ENCODE measurements at regions of chr5 and their contacts with region 1.

Region 1: GRCh38 chr5:137778772-137779564 is 24.8 kb upstream of the HNRNPA0 start:
- DNase-seq: peak in 1 of 2 donors; percentile 60
- ATAC-seq: no peak
- H3K4me3 ChIP-seq: no peak overlapping the region
- H3K4me3 Mint-ChIP-seq: no peak overlapping the region
- H3K27ac ChIP-seq: no peak overlapping the region
- H3K27ac Mint-ChIP-seq: no peak overlapping the region
- H3K4me1 ChIP-seq: no peaks in the 10 kb centered on the region
- H3K4me1 Mint-ChIP-seq: no peaks in the 10 kb centered on the region
- H3K27me3 ChIP-seq: no peaks in the 10 kb centered on the region
- H3K27me3 Mint-ChIP-seq: no peaks in the 10 kb centered on the region
- CTCF ChIP-seq: peak; percentile 76

Region 2: DNA sequence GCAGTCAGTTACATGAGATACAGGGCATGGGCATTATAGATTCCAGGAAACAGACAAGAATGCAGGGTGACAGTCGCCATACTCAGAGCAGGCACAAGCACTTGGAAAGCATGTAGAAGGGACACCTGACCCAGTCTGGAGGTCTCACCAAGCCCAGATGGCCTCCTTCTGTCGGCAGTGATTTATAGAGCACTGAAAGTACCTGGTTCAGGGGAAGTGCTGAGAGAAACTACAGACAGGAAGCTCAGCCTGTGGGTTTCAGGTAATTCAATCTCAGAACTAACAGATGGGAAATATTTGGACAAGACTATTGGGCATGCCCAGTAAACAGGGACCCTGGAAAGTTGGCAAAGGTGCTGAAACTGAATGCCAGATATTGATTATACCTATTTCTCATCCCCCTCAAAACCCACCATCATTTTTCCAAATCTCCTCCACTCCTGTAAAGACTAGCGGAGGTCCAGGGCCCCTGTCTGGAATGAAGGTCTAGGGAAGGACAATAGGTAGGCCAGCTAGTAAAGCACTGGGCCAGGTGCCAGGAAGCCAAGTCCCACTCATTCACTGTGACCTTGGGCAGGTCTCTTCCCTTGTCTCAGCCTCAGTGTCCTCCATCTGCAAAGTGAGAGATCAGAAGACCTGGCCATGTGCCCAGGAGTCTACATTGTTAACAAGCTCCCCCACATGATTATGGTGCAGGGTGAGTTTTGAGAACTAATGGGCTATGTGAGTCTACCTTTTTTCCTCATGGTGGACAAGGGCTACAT is 70.0 kb before region 1 on chr5:
- intact Hi-C with region 1: no loop called
- DNase-seq: no peak
- ATAC-seq: no peak
- H3K4me3 ChIP-seq: no peak overlapping the region
- H3K4me3 Mint-ChIP-seq: no peak overlapping the region
- H3K27ac ChIP-seq: no peak overlapping the region
- H3K27ac Mint-ChIP-seq: no peak overlapping the region
- H3K4me1 ChIP-seq: no peaks in the 10 kb centered on the region
- H3K4me1 Mint-ChIP-seq: no peaks in the 10 kb centered on the region
- H3K27me3 ChIP-seq: no peaks in the 10 kb centered on the region
- H3K27me3 Mint-ChIP-seq: no peaks in the 10 kb centered on the region
- CTCF ChIP-seq: no peak

Region 3: DNA sequence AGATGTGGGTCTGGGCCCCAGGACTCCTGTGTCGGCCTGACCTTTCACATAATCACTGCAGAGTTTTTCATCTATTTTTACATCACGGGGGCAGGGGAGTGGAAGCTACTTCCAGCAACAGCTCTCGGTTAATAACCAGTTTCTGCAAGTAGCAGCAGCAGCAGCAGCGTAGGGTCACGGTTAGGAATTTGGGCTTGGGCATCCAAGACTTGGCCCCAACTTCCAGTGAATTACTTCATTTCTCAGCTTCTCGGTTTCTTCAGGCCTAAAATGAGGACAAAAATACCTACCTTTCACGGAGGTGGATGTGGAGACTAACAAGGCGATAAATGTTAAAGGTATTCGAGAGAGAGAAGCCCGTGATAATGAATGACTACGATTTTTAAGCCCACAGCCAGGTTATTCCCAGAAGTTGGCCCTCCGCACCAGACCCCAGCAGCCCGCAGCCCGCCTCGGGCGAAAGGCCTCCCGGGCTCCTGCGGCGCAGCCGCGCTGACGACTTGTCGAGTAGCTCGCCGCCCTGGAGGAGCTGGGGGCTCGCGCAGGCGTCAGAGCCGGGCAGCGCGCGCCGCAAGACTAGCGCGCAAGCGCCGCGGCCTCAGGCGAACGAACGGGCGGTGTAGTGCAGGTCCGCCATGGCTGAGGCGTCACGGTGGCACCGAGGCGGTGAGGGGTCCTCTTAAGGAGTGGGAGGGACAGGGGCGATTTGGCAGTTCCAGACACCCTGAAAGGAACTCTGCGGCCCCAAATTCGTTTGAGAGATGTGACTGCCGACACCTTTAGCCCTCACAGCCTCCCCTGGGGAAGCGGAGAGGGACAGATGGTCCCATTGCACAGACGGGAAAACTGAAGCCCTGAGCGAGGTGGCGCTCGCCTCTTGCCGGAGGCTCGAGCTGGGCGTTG is 110.1 kb after region 1 on chr5 and contains the start of gene PKD2L2:
- intact Hi-C with region 1: loop called (anchors 10 kb)
- DNase-seq: peak; percentile 79 to 91
- ATAC-seq: peak; percentile 95 to 99 (median 99)
- H3K4me3 ChIP-seq: peak within 1 kb of the TSS; percentile 76
- H3K4me3 Mint-ChIP-seq: peak within 1 kb of the TSS; percentile 91
- H3K27ac ChIP-seq: peak within 1 kb of the TSS; percentile 80
- H3K27ac Mint-ChIP-seq: peak within 1 kb of the TSS; percentile 90 to 92
- H3K4me1 ChIP-seq: peaks cover 18% of the 10 kb centered on the region
- H3K4me1 Mint-ChIP-seq: peaks cover 12 to 14% of the 10 kb centered on the region in 2 donors
- H3K27me3 ChIP-seq: no peaks in the 10 kb centered on the region
- H3K27me3 Mint-ChIP-seq: peaks cover 0 to 5% of the 10 kb centered on the region in 2 donors
- CTCF ChIP-seq: no peak
- total RNA-seq, gene PKD2L2: 0.78 TPM in 1 of 3 donors, not detected in the others

Region 4: DNA sequence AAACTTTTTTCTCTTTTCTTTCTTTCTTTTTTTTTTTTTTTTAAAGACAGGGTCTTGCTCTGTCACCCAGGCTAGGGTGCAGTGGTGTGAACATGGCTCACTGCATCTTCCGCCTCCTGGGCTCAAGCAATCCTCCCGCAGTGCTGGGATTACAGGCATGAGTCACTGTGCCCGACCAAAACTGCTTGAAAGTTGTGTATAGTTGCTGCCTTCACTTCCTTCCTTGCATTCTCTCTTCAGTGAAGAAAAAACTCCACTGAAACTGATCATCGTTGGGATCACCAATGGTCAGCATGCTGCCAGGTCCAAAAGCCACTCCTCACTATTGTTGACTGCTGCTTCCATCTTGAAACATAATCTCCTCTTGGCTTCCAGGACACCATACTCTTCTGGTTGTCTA is 907.7 kb after region 1 on chr5:
- intact Hi-C with region 1: no loop called
- DNase-seq: no peak
- ATAC-seq: no peak
- H3K4me3 ChIP-seq: no peak overlapping the region
- H3K4me3 Mint-ChIP-seq: no peak overlapping the region
- H3K27ac ChIP-seq: no peak overlapping the region
- H3K27ac Mint-ChIP-seq: no peak overlapping the region
- H3K4me1 ChIP-seq: no peaks in the 10 kb centered on the region
- H3K4me1 Mint-ChIP-seq: peaks cover 0 to 3% of the 10 kb centered on the region in 2 donors
- H3K27me3 ChIP-seq: peaks cover 18% of the 10 kb centered on the region
- H3K27me3 Mint-ChIP-seq: peaks cover 42 to 44% of the 10 kb centered on the region in 2 donors
- CTCF ChIP-seq: no peak